Ascending aorta (tissue), 2 donors: ENCODE measurements at regions of chr5 and their contacts with region 1.

Region 1: DNA sequence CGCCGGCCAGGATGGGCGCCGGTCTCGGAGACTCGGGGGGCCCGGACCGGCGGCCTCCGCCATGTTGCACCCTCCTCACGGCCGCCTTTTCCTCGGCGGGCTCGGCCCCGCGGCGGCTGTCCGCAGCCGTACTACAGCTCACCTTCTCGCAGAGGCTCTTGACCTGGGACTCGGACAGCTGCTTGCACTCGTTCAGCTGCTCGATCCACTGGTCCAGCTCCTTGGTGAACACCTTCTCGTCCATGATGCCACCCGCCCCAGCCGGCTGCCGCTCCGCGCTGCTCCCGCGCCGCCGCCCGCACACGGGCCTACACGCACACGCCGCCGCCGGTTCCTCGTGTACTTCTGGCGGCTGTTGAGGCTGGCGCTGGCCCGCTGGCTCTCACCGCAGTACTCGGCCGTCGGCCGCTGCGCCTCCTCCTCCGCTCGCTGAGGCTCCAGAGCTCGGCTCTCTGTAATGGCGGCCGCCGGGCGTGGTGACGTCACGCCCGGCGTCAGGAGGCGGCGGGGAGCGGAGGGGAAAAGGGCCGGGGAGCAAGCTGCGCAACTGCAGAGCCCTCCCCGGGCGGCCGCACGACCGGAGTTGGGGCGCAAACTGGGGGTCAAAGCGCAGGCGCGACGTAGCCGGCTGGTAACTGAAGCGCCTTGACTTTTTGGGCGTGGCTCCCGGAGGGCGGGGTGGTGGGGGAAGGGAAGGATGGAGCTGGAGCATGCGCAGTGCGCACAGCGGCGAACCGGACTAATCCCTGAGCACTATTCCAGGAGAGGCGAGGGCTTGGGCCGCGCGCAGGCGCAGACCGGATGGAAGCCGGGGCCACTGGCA is at the start of gene PPP2CA:
- DNase-seq: peak; percentile 96 to 99
- H3K4me3 ChIP-seq: peak within 1 kb of the TSS; percentile 76 to 91
- H3K27ac ChIP-seq: peak within 1 kb of the TSS; percentile 100
- H3K4me1 ChIP-seq: peaks cover 7 to 38% of the 10 kb centered on the region in 2 donors
- H3K27me3 ChIP-seq: no peaks in the 10 kb centered on the region
- CTCF ChIP-seq: no peak
- total RNA-seq, gene PPP2CA: 26.2 TPM

Region 2: GRCh38 chr5:133952729-133953567 is 272.9 kb before region 1 on chr5:
- intact Hi-C with region 1: loop called (anchors 5 kb)
- DNase-seq: peak; percentile 64 to 95
- H3K4me3 ChIP-seq: no peak overlapping the region
- H3K27ac ChIP-seq: peak overlapping the region; percentile 91 to 95
- H3K4me1 ChIP-seq: peaks cover 18 to 33% of the 10 kb centered on the region in 2 donors
- H3K27me3 ChIP-seq: no peaks in the 10 kb centered on the region
- CTCF ChIP-seq: no peak

Region 3: GRCh38 chr5:134176511-134177368 is 49.1 kb before region 1 on chr5 and contains the start of gene SKP1:
- intact Hi-C with region 1: loop called (anchors 1 kb)
- DNase-seq: peak in 1 of 2 donors; percentile 86
- H3K4me3 ChIP-seq: peak within 1 kb of the TSS; percentile 83 to 94
- H3K27ac ChIP-seq: peak within 1 kb of the TSS; percentile 95 to 99
- H3K4me1 ChIP-seq: peaks cover 2 to 28% of the 10 kb centered on the region in 2 donors
- H3K27me3 ChIP-seq: no peaks in the 10 kb centered on the region
- CTCF ChIP-seq: no peak
- total RNA-seq, gene SKP1: 144 TPM

Region 4: GRCh38 chr5:134184155-134185135 is 41.4 kb before region 1 on chr5:
- intact Hi-C with region 1: loop called (anchors 2 kb)
- DNase-seq: peak in 1 of 2 donors; percentile 72
- H3K4me3 ChIP-seq: no peak overlapping the region
- H3K27ac ChIP-seq: no peak overlapping the region
- H3K4me1 ChIP-seq: no peaks in the 10 kb centered on the region
- H3K27me3 ChIP-seq: no peaks in the 10 kb centered on the region
- CTCF ChIP-seq: peak; percentile 78 to 87 (median 87)

Region 5: DNA sequence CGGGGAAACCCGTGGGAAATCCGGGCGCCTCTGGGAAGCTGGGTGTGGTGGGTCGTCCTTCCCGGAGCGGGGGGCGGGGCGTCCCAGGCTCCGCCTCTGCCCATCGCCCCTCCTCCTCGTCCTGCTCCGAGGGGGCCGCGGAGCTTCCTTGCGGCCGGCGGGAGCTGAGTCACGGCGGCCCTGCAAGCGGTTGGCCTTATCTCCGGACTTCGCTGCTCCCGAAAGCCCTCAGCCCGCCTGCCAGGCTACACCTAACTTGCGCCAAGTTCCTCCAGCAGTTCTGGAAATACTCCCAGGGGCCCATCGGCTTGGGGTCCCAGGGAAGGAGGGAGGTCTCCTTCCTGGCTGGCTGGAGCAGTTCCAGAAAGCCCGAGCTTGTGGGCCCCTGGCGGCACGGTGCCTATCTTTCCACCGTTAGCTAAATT is 240.0 kb after region 1 on chr5:
- intact Hi-C with region 1: no loop called
- DNase-seq: peak; percentile 52 to 94
- H3K4me3 ChIP-seq: peak overlapping the region; percentile 64 to 68
- H3K27ac ChIP-seq: peak overlapping the region; percentile 94 to 98
- H3K4me1 ChIP-seq: peaks cover 6 to 22% of the 10 kb centered on the region in 2 donors
- H3K27me3 ChIP-seq: no peaks in the 10 kb centered on the region
- CTCF ChIP-seq: no peak

Region 6: GRCh38 chr5:134648425-134649162 is 422.8 kb after region 1 on chr5 and contains the start of gene SEC24A:
- intact Hi-C with region 1: loop called (anchors 5 kb)
- DNase-seq: peak; percentile 75 to 96
- H3K4me3 ChIP-seq: peak within 1 kb of the TSS; percentile 79 to 86
- H3K27ac ChIP-seq: peak within 1 kb of the TSS; percentile 97 to 98
- H3K4me1 ChIP-seq: peaks cover 4 to 15% of the 10 kb centered on the region in 2 donors
- H3K27me3 ChIP-seq: no peaks in the 10 kb centered on the region
- CTCF ChIP-seq: no peak
- total RNA-seq, gene SEC24A: 21.2 TPM